ENCODE measurements at regions of chr12 and their contacts with region 1.

Region 1: DNA sequence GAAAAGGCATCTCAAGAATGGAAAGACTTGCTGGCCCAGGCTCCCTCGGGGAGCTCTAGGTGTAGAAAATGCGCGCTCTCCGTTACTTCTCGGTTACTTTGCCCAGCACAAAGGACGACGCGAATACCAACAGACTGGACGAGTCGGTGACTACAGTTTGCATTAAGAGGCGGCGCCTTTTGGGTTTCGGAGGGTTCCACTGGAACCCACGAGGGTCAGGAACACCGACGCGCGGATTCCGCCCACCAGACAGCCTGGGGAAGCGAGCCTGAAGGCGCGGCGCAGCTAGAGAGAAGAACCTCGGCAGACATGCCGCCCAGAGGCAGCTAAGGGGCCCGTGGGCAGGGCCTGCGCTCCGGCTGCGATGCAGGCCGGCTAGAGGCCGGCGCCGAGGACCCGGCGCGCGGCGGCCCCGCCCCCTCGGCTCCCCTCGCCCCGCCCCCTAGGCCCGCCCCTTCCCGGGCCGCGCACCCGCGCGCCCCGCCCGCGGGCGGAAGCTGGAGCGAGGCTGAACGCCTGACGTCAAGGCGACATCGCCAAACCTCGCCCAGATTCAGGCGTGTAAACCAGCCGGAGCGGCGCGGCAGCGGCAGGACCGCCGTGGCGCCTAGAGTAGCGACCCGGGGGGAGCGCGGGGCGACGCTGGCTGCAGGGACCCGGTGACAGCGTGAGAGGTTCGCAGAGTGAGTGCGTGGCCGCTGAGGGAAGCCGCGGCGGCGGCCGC is at the start of gene RAP1B:
- DNase-seq: peak; percentile 92
- H3K4me3 Mint-ChIP-seq: peak within 1 kb of the TSS; percentile 83
- H3K27ac Mint-ChIP-seq: peak within 1 kb of the TSS; percentile 94
- H3K4me1 Mint-ChIP-seq: peaks cover 38% of the 10 kb centered on the region
- H3K27me3 Mint-ChIP-seq: no peaks in the 10 kb centered on the region
- total RNA-seq, gene RAP1B: 290 to 291 TPM

Region 2: GRCh38 chr12:68358532-68359485 is 251.7 kb before region 1 on chr12:
- CTCF ChIA-PET with region 1: interaction called, 15 read pairs
- POLR2A ChIA-PET with region 1: interaction called, 132 read pairs
- DNase-seq: peak; percentile 73
- H3K4me3 Mint-ChIP-seq: no peak overlapping the region
- H3K27ac Mint-ChIP-seq: no peak overlapping the region
- H3K4me1 Mint-ChIP-seq: peaks cover 29% of the 10 kb centered on the region
- H3K27me3 Mint-ChIP-seq: no peaks in the 10 kb centered on the region

Region 3: GRCh38 chr12:68462803-68463202 is 147.7 kb before region 1 on chr12:
- CTCF ChIA-PET with region 1: interaction called, 3 read pairs
- POLR2A ChIA-PET with region 1: interaction called, 13 read pairs
- DNase-seq: no peak
- H3K4me3 Mint-ChIP-seq: peak overlapping the region; percentile 76
- H3K27ac Mint-ChIP-seq: peak overlapping the region; percentile 79
- H3K4me1 Mint-ChIP-seq: peaks cover 24% of the 10 kb centered on the region
- H3K27me3 Mint-ChIP-seq: no peaks in the 10 kb centered on the region

Region 4: GRCh38 chr12:68587448-68587873 is 23.1 kb before region 1 on chr12:
- CTCF ChIA-PET with region 1: interaction called, 4 read pairs
- POLR2A ChIA-PET with region 1: interaction called, 32 read pairs
- DNase-seq: peak; percentile 63
- H3K4me3 Mint-ChIP-seq: no peak overlapping the region
- H3K27ac Mint-ChIP-seq: peak overlapping the region; percentile 76
- H3K4me1 Mint-ChIP-seq: peaks cover 38% of the 10 kb centered on the region
- H3K27me3 Mint-ChIP-seq: no peaks in the 10 kb centered on the region

Region 5: GRCh38 chr12:68686595-68687521 is 76.3 kb after region 1 on chr12 and contains the start of gene NUP107:
- CTCF ChIA-PET with region 1: no interaction called
- POLR2A ChIA-PET with region 1: interaction called, 15 read pairs
- DNase-seq: peak; percentile 97
- H3K4me3 Mint-ChIP-seq: peak within 1 kb of the TSS; percentile 96
- H3K27ac Mint-ChIP-seq: peak within 1 kb of the TSS; percentile 92
- H3K4me1 Mint-ChIP-seq: peaks cover 45% of the 10 kb centered on the region
- H3K27me3 Mint-ChIP-seq: no peaks in the 10 kb centered on the region
- total RNA-seq, gene NUP107: 80.7 to 85.4 TPM

Measured in activated CD4-positive, alpha-beta memory T cell treated with anti-CD3 and anti-CD28 coated beads, Interleukin-2, amount 10 ng/mL, durations not matched to agents 7 days and 5 days (primary cell).